CD4-positive, alpha-beta T cell (primary cell): ENCODE measurements at regions of chr2 and their contacts with region 1.

Region 1: GRCh38 chr2:135164441-135164840 is 112.3 kb downstream of the RAB3GAP1 start:
- DNase-seq: no peak
- ATAC-seq: no peak
- H3K4me3 ChIP-seq: no peak overlapping the region
- H3K4me3 Mint-ChIP-seq: no peak overlapping the region
- H3K27ac ChIP-seq: no peak overlapping the region
- H3K27ac Mint-ChIP-seq: no peak overlapping the region
- H3K4me1 ChIP-seq: no peaks in the 10 kb centered on the region
- H3K4me1 Mint-ChIP-seq: no peaks in the 10 kb centered on the region
- H3K27me3 ChIP-seq: no peaks in the 10 kb centered on the region
- H3K27me3 Mint-ChIP-seq: no peaks in the 10 kb centered on the region
- CTCF ChIP-seq: no peak

Region 2: GRCh38 chr2:134988994-134989605 is 175.3 kb before region 1 on chr2:
- CTCF ChIA-PET with region 1: no interaction called
- POLR2A ChIA-PET with region 1: no interaction called
- intact Hi-C with region 1: no loop called
- DNase-seq: peak in 3 of 14 experiments; percentile 31 to 44 (median 41)
- ATAC-seq: no peak
- H3K4me3 ChIP-seq: no peak overlapping the region
- H3K4me3 Mint-ChIP-seq: no peak overlapping the region
- H3K27ac ChIP-seq: no peak overlapping the region
- H3K27ac Mint-ChIP-seq: no peak overlapping the region
- H3K4me1 ChIP-seq: no peaks in the 10 kb centered on the region
- H3K4me1 Mint-ChIP-seq: no peaks in the 10 kb centered on the region
- H3K27me3 ChIP-seq: no peaks in the 10 kb centered on the region
- H3K27me3 Mint-ChIP-seq: peaks cover 6% of the 10 kb centered on the region
- CTCF ChIP-seq: peak; percentile 46

Region 3: DNA sequence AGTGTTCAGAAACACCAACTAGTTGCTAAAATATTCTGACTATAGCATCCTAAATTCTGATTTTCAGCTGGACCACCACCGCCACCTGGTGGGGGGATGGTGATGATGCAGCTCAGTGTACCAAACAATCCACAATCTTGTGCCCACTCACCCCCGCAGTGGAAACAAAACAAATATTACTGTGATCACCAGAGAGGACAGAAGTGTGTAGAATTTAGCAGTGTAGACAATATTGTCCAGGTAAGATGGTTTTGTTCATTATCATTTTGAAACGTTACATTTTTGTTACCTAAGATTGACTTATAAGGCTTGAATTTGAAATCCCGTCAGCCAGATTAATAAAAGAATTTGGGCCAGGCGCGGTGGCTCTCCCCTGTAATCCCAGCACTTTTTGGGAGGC is 545.6 kb after region 1 on chr2:
- CTCF ChIA-PET with region 1: no interaction called
- POLR2A ChIA-PET with region 1: no interaction called
- intact Hi-C with region 1: loop called in 1 of 2 experiments (anchors 10 kb)
- DNase-seq: peak; percentile 46 to 82 (median 68)
- ATAC-seq: peak; percentile 87
- H3K4me3 ChIP-seq: no peak overlapping the region
- H3K4me3 Mint-ChIP-seq: no peak overlapping the region
- H3K27ac ChIP-seq: no peak overlapping the region
- H3K27ac Mint-ChIP-seq: no peak overlapping the region
- H3K4me1 ChIP-seq: no peaks in the 10 kb centered on the region
- H3K4me1 Mint-ChIP-seq: no peaks in the 10 kb centered on the region
- H3K27me3 ChIP-seq: no peaks in the 10 kb centered on the region
- H3K27me3 Mint-ChIP-seq: no peaks in the 10 kb centered on the region
- CTCF ChIP-seq: peak; percentile 99